ENCODE measurements at regions of chr2 and their contacts with region 1.

Region 1: DNA sequence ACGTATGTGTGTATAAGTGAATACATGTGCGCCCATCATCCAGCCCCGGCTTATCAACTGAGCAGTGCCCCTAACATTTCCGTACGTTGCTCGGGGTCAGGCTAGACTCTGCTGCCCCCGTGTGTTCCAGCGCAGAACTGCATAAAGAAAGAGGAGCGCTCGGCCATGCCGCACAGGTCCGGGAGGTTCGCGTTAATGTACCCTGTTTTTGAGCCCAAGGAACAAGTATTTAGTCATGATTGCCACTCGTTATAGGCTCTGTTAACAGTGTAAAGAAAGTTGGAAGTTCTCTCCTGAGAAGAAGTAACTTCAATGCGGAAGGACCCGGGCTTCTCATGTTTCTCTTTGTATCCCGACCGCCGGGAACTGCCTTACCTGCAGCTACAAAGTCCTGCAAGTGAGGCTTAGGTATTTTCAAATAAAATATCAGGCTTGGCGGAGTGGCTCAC is 55.7 kb downstream of the CD8B2 start:
- DNase-seq: peak; percentile 50 to 83 (median 70)
- ATAC-seq: peak; percentile 98
- H3K4me3 ChIP-seq: peak overlapping the region; percentile 28
- H3K4me3 Mint-ChIP-seq: peak overlapping the region; percentile 76
- H3K27ac ChIP-seq: no peak overlapping the region
- H3K27ac Mint-ChIP-seq: no peak overlapping the region
- H3K4me1 ChIP-seq: peaks cover 6% of the 10 kb centered on the region
- H3K4me1 Mint-ChIP-seq: peaks cover 5% of the 10 kb centered on the region
- H3K27me3 ChIP-seq: peaks cover 15 to 26% of the 10 kb centered on the region in 2 experiments
- H3K27me3 Mint-ChIP-seq: peaks cover 30% of the 10 kb centered on the region
- CTCF ChIP-seq: peak; percentile 96

Region 2: DNA sequence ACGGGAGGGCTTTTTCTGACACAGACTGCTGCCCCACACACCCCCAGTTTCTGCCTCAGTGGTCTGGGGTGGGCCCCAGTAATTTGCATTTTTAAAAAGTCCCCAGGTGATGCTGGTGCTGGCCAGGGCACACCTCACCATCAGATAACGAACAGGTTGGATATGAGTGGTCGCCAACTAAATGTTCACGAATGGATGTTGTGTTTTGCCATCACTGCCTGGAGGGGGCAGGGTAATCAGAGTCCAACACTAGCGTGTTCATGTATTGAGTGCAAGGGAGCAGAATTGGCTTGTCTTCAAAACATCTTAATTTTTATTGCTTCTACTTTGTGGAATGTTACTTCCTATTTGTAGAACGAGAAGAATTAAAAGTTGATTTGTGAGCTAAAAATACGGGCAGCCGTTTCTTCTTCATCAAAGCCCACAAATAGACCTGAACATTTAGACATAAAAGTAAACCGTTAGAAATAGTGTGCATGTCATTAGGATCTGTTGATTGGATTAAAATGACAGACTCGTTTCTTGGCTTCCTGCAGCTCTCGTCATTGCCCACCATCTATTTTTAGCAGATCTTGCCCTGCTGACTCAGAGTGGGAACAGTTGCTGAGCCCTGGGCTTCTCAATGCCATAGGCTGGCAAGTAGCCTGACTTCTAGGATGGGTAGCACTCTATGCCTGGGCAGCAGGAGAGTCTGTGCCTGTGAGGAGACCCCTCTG is 752.9 kb before region 1 on chr2:
- CTCF ChIA-PET with region 1: no interaction called
- POLR2A ChIA-PET with region 1: no interaction called
- intact Hi-C with region 1: loop called in 1 of 2 experiments (anchors 10 kb)
- DNase-seq: peak in 9 of 14 experiments; percentile 37 to 85 (median 67)
- ATAC-seq: peak; percentile 85
- H3K4me3 ChIP-seq: peak overlapping the region; percentile 24
- H3K4me3 Mint-ChIP-seq: peak overlapping the region; percentile 79
- H3K27ac ChIP-seq: peak overlapping the region; percentile 76 to 83
- H3K27ac Mint-ChIP-seq: peak overlapping the region; percentile 98
- H3K4me1 ChIP-seq: peaks cover 89% of the 10 kb centered on the region
- H3K4me1 Mint-ChIP-seq: peaks cover 92% of the 10 kb centered on the region
- H3K27me3 ChIP-seq: no peaks in the 10 kb centered on the region
- H3K27me3 Mint-ChIP-seq: no peaks in the 10 kb centered on the region
- CTCF ChIP-seq: no peak

Region 3: GRCh38 chr2:106104332-106105062 is 438.3 kb before region 1 on chr2:
- CTCF ChIA-PET with region 1: no interaction called
- POLR2A ChIA-PET with region 1: interaction called, 3 read pairs
- intact Hi-C with region 1: loop called (anchors 1 to 2 kb)
- DNase-seq: peak; percentile 40 to 85 (median 58)
- ATAC-seq: peak; percentile 80
- H3K4me3 ChIP-seq: no peak overlapping the region
- H3K4me3 Mint-ChIP-seq: no peak overlapping the region
- H3K27ac ChIP-seq: no peak overlapping the region
- H3K27ac Mint-ChIP-seq: peak overlapping the region; percentile 55
- H3K4me1 ChIP-seq: no peaks in the 10 kb centered on the region
- H3K4me1 Mint-ChIP-seq: peaks cover 9% of the 10 kb centered on the region
- H3K27me3 ChIP-seq: no peaks in the 10 kb centered on the region
- H3K27me3 Mint-ChIP-seq: no peaks in the 10 kb centered on the region
- CTCF ChIP-seq: peak; percentile 97

Region 4: DNA sequence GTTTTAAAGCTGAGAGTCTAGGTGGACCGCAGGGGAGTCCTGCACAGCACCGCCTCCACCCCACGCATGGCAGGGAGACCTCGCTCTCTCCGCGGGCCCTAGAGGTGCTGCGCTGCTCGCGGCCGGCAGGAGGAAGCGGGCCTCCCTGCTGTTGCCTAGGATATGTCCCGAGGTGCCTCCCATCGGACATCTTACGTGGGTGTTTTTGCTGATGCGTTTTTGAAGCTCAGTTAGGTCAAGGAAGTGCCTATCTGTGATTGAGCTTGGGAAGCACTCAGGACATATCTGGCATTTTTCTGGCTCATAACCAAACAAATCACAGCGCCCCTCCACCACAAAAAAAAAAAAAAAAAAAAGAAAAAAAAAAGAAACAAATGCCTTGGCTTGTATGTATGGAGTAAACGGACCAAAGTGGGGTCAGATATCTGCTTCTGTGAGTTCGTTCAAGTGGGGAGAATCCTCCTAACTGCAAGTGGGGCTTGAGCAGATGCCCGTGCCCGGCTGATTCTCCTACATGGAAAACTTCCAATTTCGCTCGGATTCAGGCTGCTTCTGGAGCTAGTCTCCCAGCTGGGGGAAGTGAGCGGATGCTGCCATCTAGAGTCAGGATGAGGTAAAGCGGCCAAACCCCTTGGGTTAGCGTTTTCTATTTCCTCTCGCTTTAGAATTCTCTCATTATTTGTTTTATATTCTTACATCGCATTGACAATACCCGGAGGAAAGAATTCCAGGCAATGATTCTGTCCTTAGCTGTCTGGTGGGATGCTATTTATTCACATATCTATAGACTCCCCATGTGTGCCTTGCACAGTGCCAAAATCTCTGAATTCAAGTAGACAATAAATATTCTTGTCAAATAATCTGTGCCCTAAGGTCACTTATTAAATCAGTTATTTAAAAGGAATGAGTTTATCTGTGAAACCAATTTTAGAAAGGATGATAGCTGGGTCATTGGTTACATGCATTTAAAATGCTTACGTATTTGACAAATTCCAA is 39.6 kb after region 1 on chr2:
- CTCF ChIA-PET with region 1: interaction called, 3 read pairs
- POLR2A ChIA-PET with region 1: no interaction called
- intact Hi-C with region 1: loop called in 1 of 2 experiments (anchors 2 kb)
- DNase-seq: peak; percentile 31 to 76 (median 51)
- ATAC-seq: peak; percentile 88
- H3K4me3 ChIP-seq: peak overlapping the region; percentile 58
- H3K4me3 Mint-ChIP-seq: peak overlapping the region; percentile 91
- H3K27ac ChIP-seq: no peak overlapping the region
- H3K27ac Mint-ChIP-seq: no peak overlapping the region
- H3K4me1 ChIP-seq: peaks cover 10% of the 10 kb centered on the region
- H3K4me1 Mint-ChIP-seq: peaks cover 22% of the 10 kb centered on the region
- H3K27me3 ChIP-seq: peaks cover 17% of the 10 kb centered on the region in 2 experiments
- H3K27me3 Mint-ChIP-seq: peaks cover 57% of the 10 kb centered on the region
- CTCF ChIP-seq: peak; percentile 95